Naive thymus-derived CD4-positive, alpha-beta T cell (primary cell): ENCODE measurements at regions of chr22 and their contacts with region 1.

Region 1: DNA sequence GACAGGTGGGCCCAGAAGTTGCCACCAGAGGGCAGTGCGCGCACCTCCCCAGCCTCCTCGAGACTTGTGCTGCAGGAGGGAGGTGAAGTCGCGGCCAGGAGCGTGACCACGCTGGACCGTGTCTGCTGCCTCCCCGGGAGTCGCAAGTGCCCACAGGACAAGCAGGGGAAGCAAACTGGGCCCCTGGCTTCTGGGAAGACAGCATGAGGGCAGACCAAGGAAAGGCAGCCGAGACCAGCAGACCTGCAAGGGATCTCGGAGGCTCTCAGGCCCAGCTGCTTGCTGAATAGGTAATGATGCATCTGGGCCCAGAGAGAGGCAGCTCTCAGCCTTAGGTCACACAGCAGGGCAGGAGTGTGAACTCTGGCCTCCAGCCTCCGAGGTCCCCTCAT is 17.0 kb upstream of the IL2RB start:
- DNase-seq: peak; percentile 69 to 84 (median 79)
- ATAC-seq: peak; percentile 79
- H3K4me3 ChIP-seq: peak overlapping the region; percentile 43
- H3K4me3 Mint-ChIP-seq: peak overlapping the region; percentile 60 to 87 (median 76)
- H3K27ac ChIP-seq: peak overlapping the region; percentile 53
- H3K27ac Mint-ChIP-seq: peak overlapping the region; percentile 67 to 93 (median 87)
- H3K4me1 ChIP-seq: peaks cover 65 to 89% of the 10 kb centered on the region in 2 donors
- H3K4me1 Mint-ChIP-seq: peaks cover 50 to 83% (median 71%) of the 10 kb centered on the region in 7 donors
- H3K27me3 ChIP-seq: no peaks in the 10 kb centered on the region
- H3K27me3 Mint-ChIP-seq: no peaks in the 10 kb centered on the region

Region 2: DNA sequence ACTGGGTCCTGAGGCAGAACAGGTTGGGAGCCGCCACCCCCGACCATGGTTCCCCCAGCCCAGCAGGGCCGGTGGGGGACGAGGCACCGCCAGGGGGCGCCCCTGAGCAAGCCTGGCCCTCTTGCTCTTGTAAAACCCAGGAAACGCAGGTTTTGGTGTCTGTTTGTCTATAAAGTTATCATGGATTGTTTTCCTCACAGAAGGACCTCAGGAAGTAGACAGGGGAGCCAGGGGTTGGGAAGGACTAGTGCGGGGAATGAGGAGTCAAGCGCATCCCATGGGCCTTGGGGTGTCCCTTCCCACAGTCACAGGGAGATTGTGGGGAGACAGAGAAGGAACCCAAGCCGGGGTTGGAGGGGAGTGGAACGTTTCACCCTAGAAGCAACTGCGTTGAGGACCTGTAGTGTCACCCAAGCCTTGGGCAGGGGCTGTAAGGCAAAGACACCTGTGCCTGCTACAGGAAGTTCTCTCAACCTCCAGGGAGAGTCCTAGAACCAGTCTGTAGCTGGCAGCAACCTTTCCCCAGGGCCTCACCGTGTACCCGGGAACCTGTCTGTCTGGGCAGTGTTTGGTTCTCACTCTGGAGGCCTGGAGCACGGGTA is 88.7 kb before region 1 on chr22:
- CTCF ChIA-PET with region 1: interaction called, 6 read pairs
- POLR2A ChIA-PET with region 1: interaction called, 4 read pairs
- intact Hi-C with region 1: loop called (anchors 1 kb)
- DNase-seq: peak; percentile 69 to 92 (median 83)
- ATAC-seq: peak; percentile 56
- H3K4me3 ChIP-seq: no peak overlapping the region
- H3K4me3 Mint-ChIP-seq: peak overlapping the region; percentile 41 to 81 (median 65)
- H3K27ac ChIP-seq: peak overlapping the region; percentile 93
- H3K27ac Mint-ChIP-seq: peak overlapping the region; percentile 95 to 100 (median 99)
- H3K4me1 ChIP-seq: peaks cover 34 to 35% of the 10 kb centered on the region in 2 donors
- H3K4me1 Mint-ChIP-seq: peaks cover 23 to 54% (median 40%) of the 10 kb centered on the region in 7 donors
- H3K27me3 ChIP-seq: no peaks in the 10 kb centered on the region
- H3K27me3 Mint-ChIP-seq: peaks cover 0 to 5% (median 4%) of the 10 kb centered on the region in 5 donors

Region 3: GRCh38 chr22:37148742-37149665 is 17.7 kb before region 1 on chr22:
- CTCF ChIA-PET with region 1: interaction called, 16 read pairs
- POLR2A ChIA-PET with region 1: interaction called, 28 read pairs
- intact Hi-C with region 1: loop called (anchors 1 kb)
- DNase-seq: peak in 1 of 9 donors; percentile 37
- ATAC-seq: no peak
- H3K4me3 ChIP-seq: peak overlapping the region; percentile 69
- H3K4me3 Mint-ChIP-seq: peak overlapping the region; percentile 70 to 91 (median 86)
- H3K27ac ChIP-seq: peak overlapping the region; percentile 84
- H3K27ac Mint-ChIP-seq: peak overlapping the region; percentile 92 to 99 (median 95)
- H3K4me1 ChIP-seq: peaks cover 40 to 46% of the 10 kb centered on the region in 2 donors
- H3K4me1 Mint-ChIP-seq: peaks cover 36 to 82% (median 64%) of the 10 kb centered on the region in 7 donors
- H3K27me3 ChIP-seq: no peaks in the 10 kb centered on the region
- H3K27me3 Mint-ChIP-seq: no peaks in the 10 kb centered on the region

Region 4: DNA sequence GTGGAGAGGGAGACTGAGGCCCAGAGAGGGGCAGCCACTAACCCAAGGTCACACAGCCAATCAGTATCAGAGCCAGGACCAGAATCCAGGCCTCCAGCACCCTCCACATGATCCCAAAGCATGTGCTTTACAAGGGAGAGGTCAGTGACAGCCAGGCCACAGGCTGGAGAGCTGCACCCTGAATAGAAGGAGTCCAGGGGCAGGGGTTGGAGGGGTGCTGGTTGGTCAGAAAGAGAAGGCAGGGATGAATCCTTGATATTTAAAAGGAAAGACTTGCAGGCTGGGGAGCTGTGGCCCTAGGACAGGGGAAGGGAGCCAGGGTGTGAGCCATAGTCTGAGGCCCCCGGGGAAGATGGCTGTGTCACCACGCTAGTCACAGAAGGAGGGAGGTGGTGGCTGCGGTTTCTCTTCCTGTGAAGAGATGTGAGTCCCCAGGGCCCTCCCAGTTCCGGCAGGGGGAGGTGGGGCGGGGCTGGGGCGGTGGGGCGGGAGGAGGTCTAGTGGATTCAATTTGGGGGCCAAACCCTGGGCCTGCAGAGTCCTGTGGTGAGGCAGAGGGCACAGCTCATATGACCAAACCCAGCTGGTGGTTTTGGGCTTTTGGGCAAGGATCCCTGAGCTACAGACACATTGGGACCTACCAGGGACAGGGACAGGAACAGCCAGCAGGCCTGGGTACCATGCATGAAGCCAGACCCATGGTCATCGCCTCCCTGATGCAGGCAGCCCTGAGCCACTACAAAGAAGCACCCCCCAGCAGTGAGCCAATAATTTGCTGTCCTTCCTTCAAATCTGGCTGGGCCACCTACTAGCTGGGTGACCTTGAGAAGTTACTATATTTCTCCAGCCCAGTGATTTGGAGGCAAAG is 63.4 kb after region 1 on chr22:
- CTCF ChIA-PET with region 1: no interaction called
- POLR2A ChIA-PET with region 1: interaction called, 3 read pairs
- intact Hi-C with region 1: loop called in 1 of 2 experiments (anchors 1 kb)
- DNase-seq: peak; percentile 60 to 93 (median 89)
- ATAC-seq: peak; percentile 93
- H3K4me3 ChIP-seq: peak overlapping the region; percentile 54
- H3K4me3 Mint-ChIP-seq: peak overlapping the region; percentile 75 to 99 (median 86)
- H3K27ac ChIP-seq: peak overlapping the region; percentile 90
- H3K27ac Mint-ChIP-seq: peak overlapping the region; percentile 96 to 100 (median 99)
- H3K4me1 ChIP-seq: peaks cover 80 to 92% of the 10 kb centered on the region in 2 donors
- H3K4me1 Mint-ChIP-seq: peaks cover 75 to 92% (median 87%) of the 10 kb centered on the region in 7 donors
- H3K27me3 ChIP-seq: no peaks in the 10 kb centered on the region
- H3K27me3 Mint-ChIP-seq: no peaks in the 10 kb centered on the region

Region 5: DNA sequence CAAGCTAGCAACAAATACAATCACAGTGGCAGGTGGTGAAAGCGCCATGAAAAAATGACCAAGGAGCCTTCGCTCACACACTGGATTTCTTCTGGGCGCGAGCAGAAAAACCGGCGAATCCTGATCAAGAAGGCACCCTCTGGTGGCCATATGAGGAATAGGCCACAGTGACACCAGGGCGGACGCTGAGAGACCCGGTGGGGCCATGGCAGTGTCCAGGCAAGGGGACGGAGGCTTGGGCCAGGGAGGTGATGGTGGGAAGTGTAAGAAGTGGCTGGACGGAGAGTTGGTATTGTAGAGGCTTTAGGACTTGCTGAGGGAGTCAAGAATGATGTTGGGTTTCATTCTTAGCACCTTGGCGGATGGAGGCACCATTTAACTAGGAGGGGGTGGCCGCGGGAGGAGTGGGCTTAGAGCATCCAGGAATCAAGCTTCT is 94.2 kb after region 1 on chr22:
- CTCF ChIA-PET with region 1: interaction called, 20 read pairs
- POLR2A ChIA-PET with region 1: interaction called, 11 read pairs
- intact Hi-C with region 1: loop called in 1 of 2 experiments (anchors 1 kb)
- DNase-seq: peak; percentile 46 to 71 (median 64)
- ATAC-seq: peak; percentile 91
- H3K4me3 ChIP-seq: no peak overlapping the region
- H3K4me3 Mint-ChIP-seq: peak overlapping the region in 6 of 10 donors; percentile 1 to 33 (median 15)
- H3K27ac ChIP-seq: no peak overlapping the region
- H3K27ac Mint-ChIP-seq: peak overlapping the region in 8 of 9 donors; percentile 7 to 86 (median 56)
- H3K4me1 ChIP-seq: peaks cover 7 to 24% of the 10 kb centered on the region in 2 donors
- H3K4me1 Mint-ChIP-seq: peaks cover 23 to 32% (median 27%) of the 10 kb centered on the region in 7 donors
- H3K27me3 ChIP-seq: no peaks in the 10 kb centered on the region
- H3K27me3 Mint-ChIP-seq: peaks cover 0 to 13% (median 0%) of the 10 kb centered on the region in 5 donors